ENCODE measurements at regions of chr18 and their contacts with region 1.

Region 1: GRCh38 chr18:5890331-5891183 is 4.8 kb downstream of the TMEM200C start:
- DNase-seq: peak in 1 of 2 donors; percentile 85
- H3K4me3 ChIP-seq: no peak overlapping the region
- CTCF ChIP-seq: no peak
- POLR2A ChIP-seq: no peak

Region 2: GRCh38 chr18:5710247-5710646 is 180.3 kb before region 1 on chr18:
- intact Hi-C with region 1: no loop called
- DNase-seq: no peak
- H3K4me3 ChIP-seq: no peak overlapping the region
- CTCF ChIP-seq: no peak
- POLR2A ChIP-seq: no peak

Region 3: GRCh38 chr18:6482198-6482977 is 591.8 kb after region 1 on chr18:
- intact Hi-C with region 1: loop called (anchors 10 kb)
- DNase-seq: peak; percentile 66 to 96
- H3K4me3 ChIP-seq: no peak overlapping the region
- CTCF ChIP-seq: peak in 1 of 3 donors; percentile 70
- POLR2A ChIP-seq: no peak

Measured in lower leg skin (tissue), 4 donors.